ENCODE measurements at regions of chr2 and their contacts with region 1.

Region 1: DNA sequence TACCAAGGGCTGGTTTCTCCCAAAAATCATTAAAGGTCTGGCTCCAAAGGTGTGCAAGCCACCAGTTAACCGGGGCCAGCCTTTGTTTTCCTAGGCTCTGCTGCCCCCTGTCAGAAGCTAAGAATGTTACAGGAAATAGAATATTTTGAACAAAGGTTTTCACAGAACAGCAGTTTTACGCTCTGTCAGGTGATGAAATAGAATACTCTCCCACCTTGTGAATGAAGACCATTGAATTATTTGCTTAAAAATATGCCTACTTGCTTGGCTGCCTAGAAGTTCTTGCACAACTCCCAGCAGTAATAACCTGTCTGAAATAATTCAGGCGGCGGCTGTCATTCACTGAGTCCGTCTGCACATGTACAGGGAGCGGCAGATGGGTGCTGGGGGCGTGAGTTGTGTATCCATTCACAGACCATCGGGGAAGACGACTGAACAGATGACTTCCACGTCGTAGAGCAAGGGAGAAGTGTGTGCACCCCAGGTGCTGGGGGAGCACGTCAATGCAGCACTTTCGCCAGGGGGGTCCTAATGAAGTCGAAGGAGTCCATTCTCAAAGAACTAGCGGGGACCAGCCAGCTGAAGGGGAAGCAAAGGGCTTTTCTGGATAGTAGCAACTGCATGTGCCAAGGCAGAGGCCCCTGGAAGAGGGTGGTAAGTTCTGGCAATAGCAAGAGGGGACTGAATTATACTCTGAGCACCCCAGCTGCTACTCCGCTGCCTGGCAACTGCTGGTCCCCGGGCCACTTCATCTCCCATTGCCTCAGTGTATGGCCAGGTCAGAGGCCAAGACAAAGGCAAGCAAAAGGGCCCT is 56.1 kb downstream of the SF3B1 start:
- DNase-seq: peak in 1 of 2 experiments; percentile 70
- H3K4me3 ChIP-seq: no peak overlapping the region
- H3K4me3 Mint-ChIP-seq: peak overlapping the region; percentile 48
- H3K27ac Mint-ChIP-seq: no peak overlapping the region
- H3K4me1 ChIP-seq: no peaks in the 10 kb centered on the region
- H3K4me1 Mint-ChIP-seq: peaks cover 7% of the 10 kb centered on the region
- H3K27me3 ChIP-seq: no peaks in the 10 kb centered on the region
- H3K27me3 Mint-ChIP-seq: peaks cover 6% of the 10 kb centered on the region
- CTCF ChIP-seq: peak; percentile 85 to 86

Region 2: GRCh38 chr2:197011799-197012641 is 366.7 kb before region 1 on chr2:
- CTCF ChIA-PET with region 1: no interaction called
- POLR2A ChIA-PET with region 1: no interaction called
- intact Hi-C with region 1: loop called (anchors 1 kb)
- DNase-seq: peak; percentile 43 to 51
- H3K4me3 ChIP-seq: no peak overlapping the region
- H3K4me3 Mint-ChIP-seq: no peak overlapping the region
- H3K27ac Mint-ChIP-seq: no peak overlapping the region
- H3K4me1 ChIP-seq: no peaks in the 10 kb centered on the region
- H3K4me1 Mint-ChIP-seq: no peaks in the 10 kb centered on the region
- H3K27me3 ChIP-seq: no peaks in the 10 kb centered on the region
- H3K27me3 Mint-ChIP-seq: peaks cover 22% of the 10 kb centered on the region
- CTCF ChIP-seq: peak; percentile 73 to 88

Region 3: GRCh38 chr2:197113275-197113711 is 265.4 kb before region 1 on chr2:
- CTCF ChIA-PET with region 1: interaction called, 4 read pairs
- POLR2A ChIA-PET with region 1: no interaction called
- intact Hi-C with region 1: loop called (anchors 1 kb)
- DNase-seq: peak in 1 of 2 experiments; percentile 17
- H3K4me3 ChIP-seq: no peak overlapping the region
- H3K4me3 Mint-ChIP-seq: no peak overlapping the region
- H3K27ac Mint-ChIP-seq: no peak overlapping the region
- H3K4me1 ChIP-seq: no peaks in the 10 kb centered on the region
- H3K4me1 Mint-ChIP-seq: no peaks in the 10 kb centered on the region
- H3K27me3 ChIP-seq: no peaks in the 10 kb centered on the region
- H3K27me3 Mint-ChIP-seq: peaks cover 7% of the 10 kb centered on the region
- CTCF ChIP-seq: peak; percentile 54 to 63

Region 4: GRCh38 chr2:197310271-197310985 is 68.3 kb before region 1 on chr2 and contains the start of gene ANKRD44:
- CTCF ChIA-PET with region 1: no interaction called
- POLR2A ChIA-PET with region 1: no interaction called
- intact Hi-C with region 1: loop called (anchors 2 kb)
- DNase-seq: peak; percentile 75 to 83
- H3K4me3 ChIP-seq: peak within 1 kb of the TSS; percentile 67
- H3K4me3 Mint-ChIP-seq: peak within 1 kb of the TSS; percentile 78
- H3K27ac Mint-ChIP-seq: no peak within 1 kb of the TSS
- H3K4me1 ChIP-seq: peaks cover 8% of the 10 kb centered on the region; the same call in 1 of the 2 replicates
- H3K4me1 Mint-ChIP-seq: peaks cover 8% of the 10 kb centered on the region
- H3K27me3 ChIP-seq: no peaks in the 10 kb centered on the region
- H3K27me3 Mint-ChIP-seq: peaks cover 17% of the 10 kb centered on the region
- CTCF ChIP-seq: peak in 1 of 2 experiments; percentile 11
- total RNA-seq, gene ANKRD44: 1.0 and 3.1 TPM in 2 replicates

Region 5: GRCh38 chr2:197777823-197778407 is 399.2 kb after region 1 on chr2:
- CTCF ChIA-PET with region 1: interaction called, 3 read pairs
- POLR2A ChIA-PET with region 1: no interaction called
- intact Hi-C with region 1: loop called (anchors 2 kb)
- DNase-seq: peak in 1 of 2 experiments; percentile 35
- H3K4me3 ChIP-seq: no peak overlapping the region
- H3K4me3 Mint-ChIP-seq: no peak overlapping the region
- H3K27ac Mint-ChIP-seq: no peak overlapping the region
- H3K4me1 ChIP-seq: no peaks in the 10 kb centered on the region
- H3K4me1 Mint-ChIP-seq: peaks cover 8% of the 10 kb centered on the region
- H3K27me3 ChIP-seq: no peaks in the 10 kb centered on the region
- H3K27me3 Mint-ChIP-seq: no peaks in the 10 kb centered on the region
- CTCF ChIP-seq: peak; percentile 61 to 81